ENCODE measurements at regions of chr22 and their contacts with region 1.

Region 1: DNA sequence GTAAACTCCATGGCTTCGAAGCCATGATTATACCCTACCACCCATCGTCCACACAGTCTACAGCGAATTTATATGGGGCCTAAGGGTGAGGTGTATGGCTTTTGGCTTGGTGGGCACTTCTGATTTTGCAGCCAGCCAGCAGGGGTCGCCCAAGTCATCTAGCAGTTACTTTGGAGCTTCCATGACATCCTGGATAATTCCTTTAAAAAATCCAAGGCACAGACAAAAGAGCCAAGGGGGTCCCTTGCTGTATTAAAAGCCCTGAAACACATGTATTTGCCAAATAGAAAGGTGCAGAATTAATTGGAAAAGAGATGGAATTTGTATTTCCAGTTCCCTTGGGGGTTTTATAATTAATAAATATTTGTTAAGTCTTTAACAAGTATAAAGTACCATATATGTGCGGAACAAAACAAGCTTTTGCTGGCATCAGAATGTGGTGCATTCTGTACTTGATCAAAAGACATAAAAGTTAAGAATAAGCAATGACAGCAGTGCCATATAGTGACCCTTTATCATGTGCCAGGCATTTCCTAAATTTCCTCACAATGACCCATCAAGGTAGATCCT is 132.8 kb upstream of the PITPNB start:
- DNase-seq: peak in 3 of 4 donors; percentile 53 to 78 (median 54)
- ATAC-seq: peak; percentile 82
- H3K4me3 ChIP-seq: no peak overlapping the region
- H3K27ac ChIP-seq: peak overlapping the region in 1 of 2 donors; percentile 26
- H3K4me1 ChIP-seq: peaks cover 0 to 13% of the 10 kb centered on the region in 2 donors
- H3K27me3 ChIP-seq: no peaks in the 10 kb centered on the region
- CTCF ChIP-seq: peak; percentile 65 to 79

Region 2: DNA sequence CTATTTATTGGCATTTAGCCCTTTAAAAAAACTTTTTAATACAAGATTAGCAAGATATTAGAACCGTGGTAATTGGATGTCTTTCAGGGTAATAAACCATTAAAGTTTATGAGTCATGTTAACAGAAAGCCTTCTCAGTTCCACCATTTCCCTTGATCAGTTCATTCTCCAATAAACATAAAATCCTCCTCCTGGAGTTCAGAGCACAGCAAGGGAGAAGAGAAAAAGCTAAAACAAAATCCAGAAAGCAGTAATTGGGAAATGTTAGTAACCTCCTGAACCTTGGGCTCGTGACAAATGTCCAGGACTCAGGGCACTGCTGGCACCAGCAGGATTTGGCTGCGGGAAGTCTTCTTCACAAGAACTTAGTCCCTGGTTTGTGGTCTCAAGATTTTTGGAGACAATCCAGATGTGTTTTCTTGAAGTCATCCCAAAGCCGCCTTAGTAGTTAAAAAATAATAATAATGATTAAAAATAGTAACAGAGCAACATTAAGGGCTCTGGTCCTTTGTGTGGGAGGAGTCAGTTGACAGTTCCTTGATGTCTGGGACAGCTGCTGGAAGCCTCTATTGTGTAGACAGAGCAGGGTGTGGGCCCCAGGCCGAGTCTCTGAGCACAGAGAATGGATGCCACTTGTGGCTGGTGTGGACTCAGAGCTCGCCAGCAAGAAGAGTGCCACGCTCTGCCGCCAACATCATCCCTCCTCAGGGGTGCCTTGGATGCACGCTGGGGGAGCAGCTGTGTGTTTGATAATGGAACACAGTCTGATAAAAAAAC is 89.4 kb before region 1 on chr22:
- intact Hi-C with region 1: no loop called
- DNase-seq: peak in 2 of 4 donors; percentile 36 to 59
- ATAC-seq: peak; percentile 33
- H3K4me3 ChIP-seq: no peak overlapping the region
- H3K27ac ChIP-seq: peak overlapping the region in 1 of 2 donors; percentile 36
- H3K4me1 ChIP-seq: peaks cover 0 to 10% of the 10 kb centered on the region in 2 donors
- H3K27me3 ChIP-seq: no peaks in the 10 kb centered on the region
- CTCF ChIP-seq: no peak

Region 3: GRCh38 chr22:28594797-28595462 is 543.1 kb after region 1 on chr22:
- intact Hi-C with region 1: loop called in 1 of 2 experiments (anchors 10 kb)
- DNase-seq: peak in 2 of 4 donors; percentile 42 to 66
- ATAC-seq: peak; percentile 98
- H3K4me3 ChIP-seq: no peak overlapping the region
- H3K27ac ChIP-seq: no peak overlapping the region
- H3K4me1 ChIP-seq: peaks cover 0 to 4% of the 10 kb centered on the region in 2 donors
- H3K27me3 ChIP-seq: no peaks in the 10 kb centered on the region
- CTCF ChIP-seq: peak; percentile 58 to 68